ENCODE measurements at regions of chr14 and their contacts with region 1.

Region 1: DNA sequence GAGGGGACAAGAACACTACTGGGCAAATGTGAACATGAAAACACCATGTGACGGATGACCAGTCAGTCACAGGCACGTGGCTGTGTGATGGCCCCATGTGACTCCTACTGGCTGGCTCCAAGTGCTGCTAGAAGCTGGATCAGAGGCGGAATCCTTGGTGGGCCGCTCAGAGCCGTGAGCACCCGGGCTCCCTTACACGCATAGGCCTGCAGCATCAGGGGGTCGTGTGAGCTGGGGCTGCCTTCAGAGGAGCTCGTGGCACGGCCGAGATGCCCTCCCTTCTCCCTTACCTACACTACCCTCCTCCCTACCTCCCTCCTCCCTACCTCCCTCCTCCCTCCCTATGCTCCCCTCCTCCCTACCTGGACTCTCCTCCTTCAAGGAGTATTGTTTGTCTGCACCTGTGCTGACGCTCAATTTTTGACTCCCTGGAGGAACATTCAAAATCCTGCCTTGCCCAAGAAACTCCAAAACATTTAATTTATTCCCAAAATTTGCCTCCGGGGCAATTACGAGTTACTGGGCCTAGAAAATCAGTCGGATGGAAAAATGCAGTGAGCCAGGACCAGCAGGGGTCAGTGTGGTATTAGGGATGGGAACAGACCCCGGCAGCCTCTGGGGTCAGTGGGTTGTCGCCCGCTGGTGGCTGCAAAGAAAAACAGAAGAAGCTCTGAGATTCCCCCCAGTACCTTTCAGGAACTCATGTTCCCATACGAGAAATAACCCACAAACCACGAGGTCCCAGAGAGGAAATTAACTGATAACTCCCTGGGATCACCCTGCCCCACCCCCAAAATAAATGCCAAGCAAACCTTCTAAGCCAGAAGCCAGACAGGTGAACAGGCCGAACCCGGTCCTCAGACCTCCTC is 61.2 kb downstream of the C14orf132 start:
- H3K4me3 ChIP-seq: no peak overlapping the region
- H3K27ac ChIP-seq: no peak overlapping the region
- H3K4me1 ChIP-seq: no peaks in the 10 kb centered on the region
- CTCF ChIP-seq: peak; percentile 91

Region 2: GRCh38 chr14:95561001-95561412 is 539.4 kb before region 1 on chr14:
- CTCF ChIA-PET with region 1: interaction called, 18 read pairs
- POLR2A ChIA-PET with region 1: no interaction called
- H3K4me3 ChIP-seq: no peak overlapping the region
- H3K27ac ChIP-seq: no peak overlapping the region
- H3K4me1 ChIP-seq: no peaks in the 10 kb centered on the region
- CTCF ChIP-seq: peak; percentile 96

Region 3: GRCh38 chr14:95993768-95994592 is 106.4 kb before region 1 on chr14:
- CTCF ChIA-PET with region 1: interaction called, 100 read pairs
- POLR2A ChIA-PET with region 1: no interaction called
- H3K4me3 ChIP-seq: no peak overlapping the region
- H3K27ac ChIP-seq: no peak overlapping the region
- H3K4me1 ChIP-seq: no peaks in the 10 kb centered on the region
- CTCF ChIP-seq: peak; percentile 65

Region 4: DNA sequence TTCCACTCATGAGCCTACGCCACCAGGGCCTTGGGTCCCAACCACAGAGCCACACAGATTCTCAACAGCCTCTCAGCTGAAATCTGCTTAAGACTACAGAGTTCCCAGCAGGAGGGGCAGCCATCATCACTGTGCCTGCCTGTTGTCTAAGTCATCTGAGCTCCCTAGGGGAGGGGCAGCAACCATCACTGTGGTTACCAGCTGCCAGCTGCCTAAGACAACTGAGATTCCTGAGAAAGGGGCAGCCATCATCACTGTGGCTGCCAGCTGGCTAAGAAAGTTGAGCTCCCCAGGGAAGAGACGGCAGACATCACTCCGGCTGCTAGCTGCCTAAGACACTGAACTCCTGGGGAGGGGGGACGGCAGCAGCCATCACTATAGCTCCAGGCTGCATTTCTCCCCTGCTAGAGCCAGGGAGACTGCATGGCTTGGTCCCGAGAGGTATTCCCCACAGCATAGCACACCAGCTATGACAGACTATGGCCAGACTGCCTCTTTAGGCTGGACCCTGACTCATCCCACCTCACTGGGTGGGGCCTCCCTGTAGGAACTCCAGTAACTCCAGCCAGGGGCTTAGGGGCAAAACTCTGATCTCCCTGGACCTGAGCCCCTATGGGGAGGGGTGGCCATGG is 98.4 kb before region 1 on chr14:
- CTCF ChIA-PET with region 1: interaction called, 100 read pairs
- POLR2A ChIA-PET with region 1: no interaction called
- H3K4me3 ChIP-seq: no peak overlapping the region
- H3K27ac ChIP-seq: no peak overlapping the region
- H3K4me1 ChIP-seq: no peaks in the 10 kb centered on the region
- CTCF ChIP-seq: no peak

Region 5: DNA sequence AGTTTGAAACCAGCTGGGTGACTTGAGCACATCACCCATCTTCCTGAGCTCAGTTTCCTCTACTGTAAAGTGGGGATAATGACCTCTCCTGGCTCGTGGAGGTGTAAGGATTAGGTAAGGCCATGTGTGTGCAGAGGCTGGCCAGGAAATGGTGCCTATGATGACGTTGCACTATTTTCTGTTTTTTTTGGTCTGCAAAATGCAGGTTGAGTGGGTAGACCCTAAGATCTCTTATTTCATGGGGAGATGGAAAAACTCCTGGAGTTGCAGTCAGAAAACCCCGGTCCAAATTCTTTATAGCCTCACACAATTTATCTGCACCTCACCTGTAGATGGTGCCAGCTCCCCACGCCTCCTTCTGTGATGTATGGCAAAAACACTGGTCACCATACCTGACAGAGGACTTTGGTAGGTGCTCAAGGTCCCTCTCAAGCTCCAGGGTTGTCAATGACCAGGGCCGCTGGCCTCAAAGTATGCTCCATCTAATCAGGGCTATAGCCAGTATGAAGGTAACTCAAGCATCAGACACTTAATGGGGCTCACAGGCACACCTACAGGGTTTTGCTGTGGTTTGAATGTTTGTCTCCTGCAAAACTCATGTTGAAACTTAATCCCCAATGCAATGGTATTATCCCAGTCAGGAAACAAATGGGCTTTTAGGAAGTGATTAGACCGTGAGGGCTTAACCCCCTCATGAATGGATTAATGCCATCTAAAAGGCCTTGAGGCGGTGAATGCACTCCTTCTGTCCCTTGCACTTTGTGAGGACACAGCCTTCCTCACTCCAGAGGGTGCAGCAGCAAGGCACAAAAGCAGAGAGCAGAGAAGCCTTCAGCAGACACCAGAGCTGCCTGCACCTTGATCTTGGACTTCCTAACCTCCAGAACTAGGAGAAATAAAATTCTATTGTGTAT is 43.6 kb before region 1 on chr14:
- CTCF ChIA-PET with region 1: interaction called, 16 read pairs
- POLR2A ChIA-PET with region 1: no interaction called
- H3K4me3 ChIP-seq: no peak overlapping the region
- H3K27ac ChIP-seq: no peak overlapping the region
- H3K4me1 ChIP-seq: no peaks in the 10 kb centered on the region
- CTCF ChIP-seq: no peak

Region 6: DNA sequence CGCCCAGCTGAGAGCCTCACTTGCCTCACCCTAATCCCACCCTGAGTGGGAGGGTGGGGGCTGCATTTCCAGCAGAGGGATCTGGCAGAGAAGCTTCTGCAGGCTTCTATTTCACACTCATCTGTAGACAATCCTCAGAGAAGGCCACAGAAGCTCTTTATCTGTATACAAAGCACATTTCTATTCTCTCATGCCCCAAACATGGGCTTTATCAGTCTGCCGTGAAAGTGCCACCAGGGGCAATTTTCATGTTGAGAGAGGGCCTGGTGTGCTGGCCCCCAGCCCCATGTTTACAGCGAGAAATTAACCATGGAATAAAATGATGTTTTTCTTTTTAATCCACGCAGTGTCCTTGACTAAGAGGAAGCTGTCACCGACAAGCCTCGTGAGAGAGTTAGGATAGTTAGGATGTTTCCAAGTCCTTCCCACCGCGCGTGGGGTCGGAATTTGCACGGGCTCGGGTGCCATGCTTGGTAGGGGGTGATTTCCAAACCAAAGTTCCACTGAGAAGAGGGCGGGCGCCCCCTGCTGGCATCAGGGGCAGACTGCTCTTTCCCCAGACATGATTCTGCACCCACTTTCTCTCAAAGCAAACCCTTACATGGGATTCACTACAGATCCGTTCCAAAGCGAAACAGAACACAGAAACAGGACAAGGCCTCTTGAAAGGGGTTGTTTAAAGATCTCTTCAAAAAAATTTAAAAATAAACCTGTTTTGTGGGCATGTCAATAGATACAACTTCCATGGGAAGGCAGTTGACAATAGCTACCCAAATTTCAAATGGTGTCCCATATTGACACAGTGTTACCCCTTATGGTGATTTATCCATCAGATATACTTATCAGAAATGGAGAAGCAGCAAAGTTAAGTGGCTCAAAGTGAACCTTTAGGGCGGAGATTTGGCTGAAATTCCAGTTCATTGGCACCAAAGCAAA is 175.1 kb after region 1 on chr14:
- CTCF ChIA-PET with region 1: interaction called, 165 read pairs
- POLR2A ChIA-PET with region 1: interaction called, 3 read pairs
- H3K4me3 ChIP-seq: no peak overlapping the region
- H3K27ac ChIP-seq: no peak overlapping the region
- H3K4me1 ChIP-seq: no peaks in the 10 kb centered on the region
- CTCF ChIP-seq: peak; percentile 75

Region 7: GRCh38 chr14:96297000-96297399 is 196.6 kb after region 1 on chr14:
- CTCF ChIA-PET with region 1: interaction called, 11 read pairs
- POLR2A ChIA-PET with region 1: no interaction called
- H3K4me3 ChIP-seq: no peak overlapping the region
- H3K27ac ChIP-seq: no peak overlapping the region
- H3K4me1 ChIP-seq: no peaks in the 10 kb centered on the region
- CTCF ChIP-seq: no peak